ENCODE measurements at regions of chr12 and their contacts with region 1.

Region 1: DNA sequence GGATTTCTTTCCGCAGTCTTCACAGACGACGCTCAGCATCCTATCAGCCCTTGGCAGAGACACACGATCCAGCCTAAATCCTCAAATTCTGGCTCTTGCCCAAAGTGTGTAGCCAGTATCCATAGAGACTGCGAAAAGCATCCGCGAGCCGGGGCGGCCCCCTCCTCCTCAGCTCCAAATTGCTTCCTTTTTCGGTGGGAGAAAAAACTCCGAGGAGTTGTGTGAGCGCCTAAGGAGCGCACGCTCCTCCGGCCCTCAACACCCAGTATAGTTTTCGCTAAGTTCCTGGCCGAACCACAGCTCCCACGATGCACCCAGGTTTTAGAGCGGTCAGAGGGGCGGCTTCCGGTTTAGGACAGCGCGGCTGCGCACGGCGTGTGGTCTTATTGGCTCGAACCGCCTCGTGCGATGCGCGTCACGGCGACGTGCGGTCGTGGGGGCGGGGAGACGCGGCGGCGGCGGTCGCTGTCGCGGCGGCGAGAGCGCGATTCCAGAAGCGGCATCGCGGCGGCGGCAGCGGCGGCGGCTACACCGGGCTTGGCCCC is at the start of gene ADIPOR2:
- DNase-seq: peak; percentile 94
- H3K4me3 Mint-ChIP-seq: peak within 1 kb of the TSS; percentile 98
- H3K27ac Mint-ChIP-seq: peak within 1 kb of the TSS; percentile 84
- H3K4me1 Mint-ChIP-seq: peaks cover 43% of the 10 kb centered on the region
- H3K27me3 Mint-ChIP-seq: no peaks in the 10 kb centered on the region
- total RNA-seq, gene ADIPOR2: 63.8 to 71.8 TPM

Region 2: DNA sequence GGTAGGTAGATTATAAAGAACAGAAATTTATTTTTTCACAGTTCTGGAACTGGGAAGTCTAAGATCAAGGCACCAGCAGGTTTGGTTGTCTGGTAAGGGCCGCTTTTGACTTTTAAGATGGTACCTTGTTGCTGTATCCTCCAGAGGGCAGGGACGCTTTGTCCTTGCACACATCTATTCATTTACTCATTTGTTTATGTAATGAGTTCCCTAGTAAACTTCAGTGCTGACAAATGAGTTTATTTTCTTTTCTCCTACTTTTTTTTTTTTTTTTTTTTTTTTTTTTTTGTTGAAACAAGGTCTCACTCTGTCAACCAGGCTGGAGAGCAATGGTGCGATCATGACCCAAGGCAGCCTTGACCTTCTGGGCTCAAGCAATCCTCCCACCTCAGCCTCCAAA is 292.0 kb before region 1 on chr12:
- CTCF ChIA-PET with region 1: no interaction called
- POLR2A ChIA-PET with region 1: no interaction called
- DNase-seq: no peak
- H3K4me3 Mint-ChIP-seq: no peak overlapping the region
- H3K27ac Mint-ChIP-seq: no peak overlapping the region
- H3K4me1 Mint-ChIP-seq: no peaks in the 10 kb centered on the region
- H3K27me3 Mint-ChIP-seq: no peaks in the 10 kb centered on the region

Region 3: DNA sequence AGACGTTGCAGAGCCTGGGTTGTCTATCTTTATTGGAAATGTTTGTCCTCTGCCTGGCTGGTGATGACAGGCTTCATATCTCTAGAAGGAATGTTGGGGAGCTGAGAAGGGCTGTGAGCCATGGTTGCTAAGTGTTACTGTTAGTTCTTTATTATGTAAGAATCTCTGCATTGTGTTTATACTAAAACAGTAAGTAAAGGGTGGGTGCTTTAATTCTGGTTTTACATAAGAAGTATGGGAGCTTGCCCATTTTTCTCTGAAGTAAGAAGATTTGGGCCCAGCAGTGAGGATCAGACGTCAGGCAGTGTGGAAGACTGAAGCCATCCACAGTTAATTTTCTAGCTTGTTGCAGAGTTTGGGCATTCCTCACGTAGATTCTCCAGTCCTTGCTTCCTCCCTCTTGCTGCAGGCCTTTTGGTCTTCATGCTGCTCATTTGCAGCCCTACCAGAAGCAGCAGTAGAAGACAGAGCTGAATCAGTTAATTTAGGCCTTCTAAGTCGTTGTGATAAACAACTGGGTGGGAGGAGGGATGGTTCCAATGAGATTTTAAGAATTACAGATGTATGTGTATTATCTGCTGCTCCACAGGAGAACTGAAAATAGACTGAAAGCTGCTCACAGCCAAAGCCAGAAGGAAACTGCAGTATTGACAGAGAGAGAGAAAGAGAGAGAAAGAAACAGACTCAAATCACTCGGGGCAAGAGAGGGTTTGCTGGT is 40.2 kb before region 1 on chr12:
- CTCF ChIA-PET with region 1: interaction called, 8 read pairs
- POLR2A ChIA-PET with region 1: interaction called, 12 read pairs
- DNase-seq: no peak
- H3K4me3 Mint-ChIP-seq: no peak overlapping the region
- H3K27ac Mint-ChIP-seq: no peak overlapping the region
- H3K4me1 Mint-ChIP-seq: peaks cover 8% of the 10 kb centered on the region
- H3K27me3 Mint-ChIP-seq: peaks cover 43% of the 10 kb centered on the region

Region 4: DNA sequence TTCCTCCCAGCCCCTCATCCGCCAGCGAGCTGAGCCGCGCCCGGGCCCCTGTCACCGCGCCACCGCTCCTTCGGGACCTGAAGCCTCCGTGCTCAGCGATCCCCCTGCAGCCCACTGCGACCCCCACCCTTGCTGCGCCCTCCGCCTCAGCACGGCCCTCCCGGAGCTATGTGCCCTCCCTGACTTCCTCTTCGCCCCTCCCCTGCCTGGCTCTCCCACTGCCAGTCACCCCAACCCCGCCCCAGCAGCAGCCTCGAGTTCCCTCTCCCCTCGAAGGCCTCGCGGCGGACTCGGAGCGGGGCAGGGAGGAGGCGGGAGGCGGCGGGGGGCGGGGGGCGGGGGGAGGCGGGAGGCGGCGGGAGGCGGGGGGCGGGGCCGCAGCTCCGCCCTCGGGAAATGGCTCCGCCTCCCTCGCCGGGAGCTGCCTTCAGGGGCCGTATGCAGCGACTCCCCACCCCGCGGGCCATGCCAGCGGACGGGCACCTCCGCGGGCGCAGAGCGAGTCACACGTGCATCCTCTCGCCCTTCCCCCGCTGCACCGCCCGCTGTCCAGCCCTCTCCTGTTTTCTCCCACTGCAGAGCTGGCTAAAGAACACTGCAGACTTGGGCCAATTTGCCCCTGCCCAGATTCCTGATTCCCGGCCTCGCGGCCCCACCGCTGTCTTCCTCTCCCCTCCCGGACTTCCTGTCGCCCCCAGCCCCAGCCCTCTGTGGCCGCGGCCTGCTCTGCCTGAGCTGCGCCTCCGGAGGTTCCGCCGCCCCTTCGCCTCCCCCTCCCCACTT is 28.9 kb before region 1 on chr12:
- CTCF ChIA-PET with region 1: interaction called, 7 read pairs
- POLR2A ChIA-PET with region 1: interaction called, 23 read pairs
- DNase-seq: peak; percentile 89
- H3K4me3 Mint-ChIP-seq: peak overlapping the region; percentile 64
- H3K27ac Mint-ChIP-seq: peak overlapping the region; percentile 58
- H3K4me1 Mint-ChIP-seq: peaks cover 36% of the 10 kb centered on the region
- H3K27me3 Mint-ChIP-seq: peaks cover 2% of the 10 kb centered on the region

Region 5: GRCh38 chr12:1668833-1669543 is 21.7 kb before region 1 on chr12:
- CTCF ChIA-PET with region 1: interaction called, 7 read pairs
- POLR2A ChIA-PET with region 1: interaction called, 15 read pairs
- DNase-seq: no peak
- H3K4me3 Mint-ChIP-seq: no peak overlapping the region
- H3K27ac Mint-ChIP-seq: peak overlapping the region; percentile 62
- H3K4me1 Mint-ChIP-seq: peaks cover 54% of the 10 kb centered on the region
- H3K27me3 Mint-ChIP-seq: no peaks in the 10 kb centered on the region

Region 6: GRCh38 chr12:1702713-1703112 is 12.1 kb after region 1 on chr12:
- CTCF ChIA-PET with region 1: interaction called, 3 read pairs
- POLR2A ChIA-PET with region 1: interaction called, 10 read pairs
- DNase-seq: no peak
- H3K4me3 Mint-ChIP-seq: no peak overlapping the region
- H3K27ac Mint-ChIP-seq: no peak overlapping the region
- H3K4me1 Mint-ChIP-seq: peaks cover 49% of the 10 kb centered on the region
- H3K27me3 Mint-ChIP-seq: no peaks in the 10 kb centered on the region

Region 7: GRCh38 chr12:2163172-2163941 is 472.7 kb after region 1 on chr12:
- CTCF ChIA-PET with region 1: no interaction called
- POLR2A ChIA-PET with region 1: no interaction called
- DNase-seq: no peak
- H3K4me3 Mint-ChIP-seq: no peak overlapping the region
- H3K27ac Mint-ChIP-seq: no peak overlapping the region
- H3K4me1 Mint-ChIP-seq: no peaks in the 10 kb centered on the region
- H3K27me3 Mint-ChIP-seq: peaks cover 10% of the 10 kb centered on the region